Activated naive CD4-positive, alpha-beta T cell treated with anti-CD3 and anti-CD28 coated beads for 36 hours (primary cell): ENCODE measurements at regions of chr20 and their contacts with region 1.

Region 1: GRCh38 chr20:59222253-59223181 is 58.9 kb downstream of the ZNF831 start:
- DNase-seq: peak; percentile 86
- H3K4me3 Mint-ChIP-seq: peak overlapping the region; percentile 69
- H3K27ac Mint-ChIP-seq: peak overlapping the region; percentile 37
- H3K4me1 Mint-ChIP-seq: peaks cover 21% of the 10 kb centered on the region
- H3K27me3 Mint-ChIP-seq: no peaks in the 10 kb centered on the region

Region 2: GRCh38 chr20:58870239-58871014 is 352.1 kb before region 1 on chr20:
- CTCF ChIA-PET with region 1: interaction called, 4 read pairs
- intact Hi-C with region 1: loop called (anchors 1 kb)
- DNase-seq: peak; percentile 67
- H3K4me3 Mint-ChIP-seq: no peak overlapping the region
- H3K27ac Mint-ChIP-seq: no peak overlapping the region
- H3K4me1 Mint-ChIP-seq: peaks cover 4% of the 10 kb centered on the region
- H3K27me3 Mint-ChIP-seq: no peaks in the 10 kb centered on the region

Region 3: GRCh38 chr20:59232618-59233017 is 10.1 kb after region 1 on chr20:
- CTCF ChIA-PET with region 1: interaction called, 11 read pairs
- intact Hi-C with region 1: no loop called
- DNase-seq: no peak
- H3K4me3 Mint-ChIP-seq: no peak overlapping the region
- H3K27ac Mint-ChIP-seq: no peak overlapping the region
- H3K4me1 Mint-ChIP-seq: peaks cover 6% of the 10 kb centered on the region
- H3K27me3 Mint-ChIP-seq: no peaks in the 10 kb centered on the region

Region 4: GRCh38 chr20:59253779-59254319 is 31.3 kb after region 1 on chr20:
- CTCF ChIA-PET with region 1: interaction called, 7 read pairs
- intact Hi-C with region 1: loop called (anchors 1 kb)
- DNase-seq: peak; percentile 64
- H3K4me3 Mint-ChIP-seq: peak overlapping the region; percentile 16
- H3K27ac Mint-ChIP-seq: peak overlapping the region; percentile 92
- H3K4me1 Mint-ChIP-seq: peaks cover 50% of the 10 kb centered on the region
- H3K27me3 Mint-ChIP-seq: no peaks in the 10 kb centered on the region

Region 5: GRCh38 chr20:59403261-59403961 is 180.9 kb after region 1 on chr20:
- CTCF ChIA-PET with region 1: interaction called, 14 read pairs
- intact Hi-C with region 1: loop called (anchors 1 kb)
- DNase-seq: peak; percentile 72
- H3K4me3 Mint-ChIP-seq: no peak overlapping the region
- H3K27ac Mint-ChIP-seq: no peak overlapping the region
- H3K4me1 Mint-ChIP-seq: peaks cover 2% of the 10 kb centered on the region
- H3K27me3 Mint-ChIP-seq: peaks cover 8% of the 10 kb centered on the region